Heart right ventricle (tissue), 16 donors: ENCODE measurements at regions of chr2 and their contacts with region 1.

Region 1: GRCh38 chr2:230712443-230713330 is at the start of gene CAB39:
- DNase-seq: peak; percentile 82 to 91
- ATAC-seq: peak; percentile 93 to 97 (median 94)
- H3K4me3 ChIP-seq: peak within 1 kb of the TSS; percentile 68 to 99 (median 96)
- H3K27ac ChIP-seq: peak within 1 kb of the TSS; percentile 88 to 98 (median 94)
- H3K4me1 ChIP-seq: peaks cover 0 to 62% (median 36%) of the 10 kb centered on the region in 9 donors
- H3K27me3 ChIP-seq: no peaks in the 10 kb centered on the region
- CTCF ChIP-seq: peak; percentile 73 to 97 (median 89)
- total RNA-seq, gene CAB39: 72.6 to 99.7 (median 91.1) TPM

Region 2: DNA sequence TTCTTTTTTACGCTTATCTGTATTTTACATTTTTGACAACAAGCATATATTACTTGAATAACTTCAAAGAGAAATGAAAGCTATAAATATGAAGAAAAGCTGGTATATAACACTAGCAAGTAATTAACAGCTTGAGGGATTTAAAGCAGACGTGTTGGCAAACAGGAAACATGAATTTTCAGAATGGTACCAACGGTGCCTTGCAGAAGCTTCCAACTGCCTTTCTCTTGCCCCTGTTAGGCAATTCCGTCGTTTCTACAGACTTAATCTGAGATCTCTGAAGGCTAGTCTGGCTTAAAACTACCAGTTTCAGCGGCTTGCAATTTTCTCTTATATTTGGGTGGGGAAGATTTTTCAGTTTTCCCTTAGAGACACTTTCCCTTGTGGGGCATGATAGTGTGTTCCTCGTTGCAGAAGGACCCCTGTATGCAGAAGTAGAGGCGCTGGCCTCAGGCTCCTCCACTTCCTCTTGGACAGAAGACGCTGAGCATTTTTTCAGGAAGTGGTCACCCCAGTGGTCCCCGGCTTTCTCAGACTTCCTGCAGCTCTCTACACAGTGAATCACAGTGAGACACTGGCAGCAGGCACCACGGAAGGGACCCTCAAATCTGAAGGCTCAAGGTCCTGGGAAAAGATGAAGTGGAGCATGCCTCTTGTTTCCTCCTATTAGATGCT is 587.8 kb before region 1 on chr2:
- intact Hi-C with region 1: no loop called
- DNase-seq: peak in 1 of 2 donors; percentile 17
- ATAC-seq: peak in 3 of 8 donors; percentile 44 to 52 (median 52)
- H3K4me3 ChIP-seq: peak overlapping the region in 1 of 10 donors; percentile 30
- H3K27ac ChIP-seq: peak overlapping the region in 1 of 10 donors; percentile 50
- H3K4me1 ChIP-seq: peaks cover 0 to 53% (median 10%) of the 10 kb centered on the region in 9 donors
- H3K27me3 ChIP-seq: no peaks in the 10 kb centered on the region
- CTCF ChIP-seq: no peak

Region 3: DNA sequence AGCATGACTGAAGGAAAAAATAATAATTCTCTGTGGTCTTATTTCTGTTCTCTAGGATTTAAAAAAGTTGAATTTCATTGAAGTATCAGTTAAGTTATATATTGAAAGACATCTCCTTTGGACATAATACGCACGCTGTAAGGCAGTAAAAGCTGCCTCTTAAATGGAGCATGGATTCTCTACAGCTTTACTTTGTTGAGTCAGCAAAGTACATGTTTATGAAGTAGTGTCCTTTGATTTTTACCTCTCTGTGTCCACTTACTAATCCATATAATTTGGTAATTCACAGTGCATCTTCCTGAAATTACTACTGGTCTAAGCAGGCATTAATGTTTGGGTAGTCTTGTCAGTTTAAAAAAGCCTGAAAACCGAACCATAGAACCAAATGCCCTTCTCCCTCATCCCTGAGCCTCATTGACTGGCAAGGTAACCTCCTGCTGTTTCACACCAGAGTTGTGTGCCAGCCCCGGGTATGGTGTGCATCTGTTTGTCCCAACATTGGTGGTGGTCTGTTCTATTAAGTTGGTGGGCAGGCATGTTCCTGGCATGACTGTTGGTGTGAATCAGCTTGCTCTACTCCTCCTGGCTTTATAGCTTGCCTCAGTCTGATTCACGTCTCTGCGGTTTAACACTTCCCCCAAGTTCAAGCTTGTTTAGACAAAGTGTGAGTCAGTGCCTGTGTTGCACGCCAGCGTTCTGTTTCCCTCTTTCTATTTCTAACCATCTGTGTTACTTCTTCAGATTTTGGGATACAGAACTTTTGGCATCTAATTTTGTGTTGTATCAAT is 81.1 kb after region 1 on chr2:
- intact Hi-C with region 1: loop called (anchors 2 to 10 kb)
- DNase-seq: peak; percentile 29 to 69
- ATAC-seq: peak; percentile 62 to 88 (median 78)
- H3K4me3 ChIP-seq: no peak overlapping the region
- H3K27ac ChIP-seq: peak overlapping the region in 8 of 10 donors; percentile 13 to 86 (median 40)
- H3K4me1 ChIP-seq: peaks cover 0 to 83% (median 54%) of the 10 kb centered on the region in 9 donors
- H3K27me3 ChIP-seq: no peaks in the 10 kb centered on the region
- CTCF ChIP-seq: no peak

Region 4: DNA sequence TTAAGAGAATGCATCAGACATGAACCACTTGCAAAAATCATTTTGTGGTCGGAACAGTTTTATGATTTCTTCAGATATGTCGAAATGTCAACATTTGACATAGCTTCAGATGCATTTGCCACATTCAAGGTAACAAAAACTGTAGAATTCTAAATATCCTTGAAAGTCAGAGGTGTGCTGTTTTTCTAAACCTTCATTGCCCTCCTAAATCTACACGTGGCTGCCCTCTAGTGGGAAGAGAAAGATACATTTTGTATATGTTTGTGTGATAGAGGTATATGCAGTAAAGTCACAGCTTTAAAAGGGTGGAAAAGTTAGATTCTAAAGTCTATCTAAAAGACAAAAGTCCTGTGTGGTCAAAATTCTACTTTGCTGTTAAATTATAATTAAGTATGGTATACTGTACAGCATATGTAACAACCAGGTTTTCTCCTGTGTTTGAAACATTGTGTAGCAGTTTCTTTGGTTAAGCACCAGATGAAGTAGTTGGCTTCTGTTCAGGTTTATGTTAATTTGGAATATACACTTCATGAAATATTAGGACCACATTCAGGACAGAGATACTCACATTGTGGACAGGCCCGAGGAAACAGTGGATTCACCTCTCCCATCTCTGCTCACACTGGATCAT is 86.2 kb after region 1 on chr2:
- intact Hi-C with region 1: loop called (anchors 2 to 10 kb)
- DNase-seq: peak in 1 of 2 donors; percentile 35
- ATAC-seq: peak in 3 of 8 donors; percentile 46 to 52 (median 46)
- H3K4me3 ChIP-seq: no peak overlapping the region
- H3K27ac ChIP-seq: no peak overlapping the region
- H3K4me1 ChIP-seq: peaks cover 0 to 51% (median 38%) of the 10 kb centered on the region in 9 donors
- H3K27me3 ChIP-seq: no peaks in the 10 kb centered on the region
- CTCF ChIP-seq: peak; percentile 39 to 74 (median 65)